Left ventricle myocardium inferior (tissue), 1 donor: ENCODE measurements at regions of chr11 and their contacts with region 1.

Region 1: DNA sequence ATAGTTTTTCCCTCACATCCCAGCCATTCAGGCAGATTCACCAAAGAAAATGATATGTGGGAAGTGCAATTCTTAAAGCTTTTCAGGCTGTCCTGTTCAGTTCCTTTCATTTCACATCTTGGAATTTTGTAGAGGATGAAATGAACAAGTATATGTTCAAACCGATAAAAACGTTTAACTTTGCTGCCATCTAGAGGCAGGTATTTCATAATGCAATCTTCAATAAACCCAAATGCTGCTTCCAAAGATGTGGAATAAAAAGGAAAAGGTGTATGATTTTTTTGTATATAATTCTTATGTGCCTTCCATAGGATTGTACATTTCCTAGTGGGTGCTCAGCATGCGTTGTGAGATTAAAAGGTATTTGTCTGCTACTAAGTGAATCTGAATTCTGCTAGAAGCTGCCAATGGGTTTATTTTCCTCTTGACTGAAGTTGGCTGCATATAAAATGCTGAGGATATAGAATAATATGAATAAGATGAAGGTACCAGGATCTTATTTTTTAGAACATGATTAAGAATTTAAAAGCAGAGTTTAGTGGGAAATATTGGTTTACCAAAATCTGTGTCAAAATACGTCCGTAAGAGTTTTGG is 199.3 kb downstream of the PGR start:
- DNase-seq: no peak
- H3K4me3 ChIP-seq: no peak overlapping the region
- H3K27ac ChIP-seq: no peak overlapping the region
- H3K4me1 ChIP-seq: peaks cover 9% of the 10 kb centered on the region
- H3K27me3 ChIP-seq: no peaks in the 10 kb centered on the region
- CTCF ChIP-seq: peak; percentile 74

Region 2: DNA sequence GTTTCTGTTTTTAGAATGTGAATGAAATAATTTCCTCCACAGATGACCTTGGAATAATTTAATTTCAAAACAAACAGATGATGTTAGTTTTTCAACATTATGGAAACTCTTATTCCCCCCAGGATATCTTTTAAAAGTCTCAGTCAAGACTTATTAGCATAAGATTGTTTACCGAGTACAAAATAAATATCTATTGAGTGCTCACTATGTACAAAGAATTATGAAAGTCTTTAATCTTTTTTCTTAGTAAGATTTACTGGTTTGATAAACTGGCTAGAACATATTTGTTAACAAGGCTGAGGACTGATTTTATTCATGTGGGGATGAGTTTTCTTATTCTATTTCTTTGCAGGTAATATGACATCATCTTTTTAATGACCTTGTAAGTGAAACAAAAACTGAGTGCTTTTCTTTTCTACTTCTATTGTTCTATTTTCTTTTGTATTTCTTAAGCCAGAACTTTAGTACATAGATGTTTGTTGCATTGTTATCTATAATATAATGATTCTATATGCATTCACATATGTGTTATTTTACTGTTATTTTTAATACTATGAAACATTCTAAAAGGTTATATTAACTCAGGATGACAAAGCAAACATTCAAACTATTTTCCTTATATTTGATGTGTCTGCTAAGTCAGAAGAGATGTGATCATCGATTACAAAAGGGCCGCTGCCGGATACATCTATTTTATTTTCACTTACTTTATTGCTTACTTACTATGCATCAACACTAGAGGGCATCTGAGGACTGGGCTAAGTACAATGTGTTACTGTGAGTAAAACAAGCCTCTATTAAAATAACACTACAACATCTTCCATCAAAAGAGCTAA is 354.2 kb before region 1 on chr11:
- intact Hi-C with region 1: loop called (anchors 2 kb)
- DNase-seq: no peak
- H3K4me3 ChIP-seq: no peak overlapping the region
- H3K27ac ChIP-seq: no peak overlapping the region
- H3K4me1 ChIP-seq: peaks cover under 1% of the 10 kb centered on the region
- H3K27me3 ChIP-seq: no peaks in the 10 kb centered on the region
- CTCF ChIP-seq: peak; percentile 87

Region 3: GRCh38 chr11:100687630-100688395 is 242.5 kb before region 1 on chr11:
- intact Hi-C with region 1: loop called (anchors 10 kb)
- DNase-seq: peak; percentile 31
- H3K4me3 ChIP-seq: peak overlapping the region; percentile 81
- H3K27ac ChIP-seq: peak overlapping the region; percentile 89
- H3K4me1 ChIP-seq: peaks cover 53% of the 10 kb centered on the region
- H3K27me3 ChIP-seq: no peaks in the 10 kb centered on the region
- CTCF ChIP-seq: peak; percentile 75

Region 4: DNA sequence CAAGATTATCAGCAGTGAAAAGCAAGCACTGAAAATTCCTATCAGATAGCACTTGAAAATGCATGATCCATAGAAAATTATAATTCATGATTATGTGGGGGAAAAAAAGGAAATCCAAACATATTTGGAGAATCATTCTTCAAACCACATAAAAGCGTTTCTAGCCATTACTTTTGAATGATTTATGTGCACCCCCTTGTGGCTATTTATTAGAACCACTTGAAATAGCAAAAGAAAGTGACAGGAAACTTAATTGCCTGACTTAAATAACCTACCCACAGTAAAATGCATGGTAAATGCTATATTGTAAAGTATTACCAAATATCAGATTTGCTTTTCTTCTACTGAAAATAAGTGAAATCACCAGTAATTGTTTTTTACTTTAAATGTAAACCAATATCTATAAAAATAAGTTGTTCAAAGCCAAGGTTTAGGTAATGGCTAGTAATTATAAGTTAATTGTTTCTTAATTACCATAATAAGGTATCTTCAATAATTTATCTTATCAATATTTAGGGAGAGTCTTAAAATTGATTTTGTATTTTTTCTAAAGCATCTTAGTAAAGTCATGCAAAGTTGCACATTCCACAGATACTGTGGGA is 74.7 kb before region 1 on chr11:
- intact Hi-C with region 1: loop called (anchors 10 kb)
- DNase-seq: no peak
- H3K4me3 ChIP-seq: no peak overlapping the region
- H3K27ac ChIP-seq: no peak overlapping the region
- H3K4me1 ChIP-seq: peaks cover 14% of the 10 kb centered on the region
- H3K27me3 ChIP-seq: no peaks in the 10 kb centered on the region
- CTCF ChIP-seq: peak; percentile 80